Right lobe of liver (tissue), 6 donors: ENCODE measurements at regions of chr10 and their contacts with region 1.

Region 1: GRCh38 chr10:30002104-30002950 is 57.1 kb downstream of the JCAD start:
- DNase-seq: peak; percentile 84 to 90 (median 87)
- ATAC-seq: peak; percentile 73 to 80 (median 78)
- H3K4me3 ChIP-seq: no peak overlapping the region
- H3K27ac ChIP-seq: peak overlapping the region in 2 of 3 donors; percentile 90 to 95
- H3K4me1 ChIP-seq: peaks cover 0 to 36% (median 8%) of the 10 kb centered on the region in 4 donors
- H3K27me3 ChIP-seq: no peaks in the 10 kb centered on the region
- CTCF ChIP-seq: peak; percentile 80 to 93 (median 86)
- POLR2A ChIP-seq: no peak

Region 2: GRCh38 chr10:29926693-29927048 is 75.7 kb before region 1 on chr10:
- intact Hi-C with region 1: loop called in 1 of 2 experiments (anchors 10 kb)
- DNase-seq: peak in 1 of 3 donors; percentile 59
- ATAC-seq: peak; percentile 88 to 96 (median 92)
- H3K4me3 ChIP-seq: no peak overlapping the region
- H3K27ac ChIP-seq: no peak overlapping the region
- H3K4me1 ChIP-seq: no peaks in the 10 kb centered on the region
- H3K27me3 ChIP-seq: no peaks in the 10 kb centered on the region
- CTCF ChIP-seq: peak; percentile 67 to 81 (median 68)
- POLR2A ChIP-seq: no peak

Region 3: DNA sequence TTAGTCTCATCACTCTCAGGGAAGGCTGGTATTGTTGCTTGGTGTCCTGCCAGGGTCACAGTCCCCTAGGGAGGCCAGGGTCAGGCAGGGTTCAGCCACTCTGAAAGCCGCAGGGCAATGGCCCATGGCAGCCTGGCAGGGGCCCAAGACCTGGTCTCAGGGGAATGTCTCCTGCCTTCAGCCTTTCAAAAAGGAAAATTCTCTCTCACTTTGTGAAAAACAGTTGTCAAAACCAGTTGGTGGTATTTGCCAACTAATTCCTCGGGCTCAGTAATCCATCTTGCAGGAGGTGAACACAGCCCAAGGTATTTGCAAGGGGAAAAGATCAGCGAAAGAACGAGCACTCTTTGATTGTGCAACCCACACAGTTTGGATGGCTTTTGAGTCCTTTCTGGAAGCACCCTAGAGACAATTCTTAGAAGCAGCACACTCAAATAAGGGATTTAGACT is 44.4 kb before region 1 on chr10:
- intact Hi-C with region 1: loop called in 1 of 2 experiments (anchors 2 kb)
- DNase-seq: peak; percentile 92 to 97 (median 94)
- ATAC-seq: peak; percentile 62 to 75 (median 72)
- H3K4me3 ChIP-seq: no peak overlapping the region
- H3K27ac ChIP-seq: peak overlapping the region; percentile 72 to 95 (median 86)
- H3K4me1 ChIP-seq: peaks cover 0 to 56% (median 17%) of the 10 kb centered on the region in 4 donors
- H3K27me3 ChIP-seq: no peaks in the 10 kb centered on the region
- CTCF ChIP-seq: no peak
- POLR2A ChIP-seq: no peak

Region 4: DNA sequence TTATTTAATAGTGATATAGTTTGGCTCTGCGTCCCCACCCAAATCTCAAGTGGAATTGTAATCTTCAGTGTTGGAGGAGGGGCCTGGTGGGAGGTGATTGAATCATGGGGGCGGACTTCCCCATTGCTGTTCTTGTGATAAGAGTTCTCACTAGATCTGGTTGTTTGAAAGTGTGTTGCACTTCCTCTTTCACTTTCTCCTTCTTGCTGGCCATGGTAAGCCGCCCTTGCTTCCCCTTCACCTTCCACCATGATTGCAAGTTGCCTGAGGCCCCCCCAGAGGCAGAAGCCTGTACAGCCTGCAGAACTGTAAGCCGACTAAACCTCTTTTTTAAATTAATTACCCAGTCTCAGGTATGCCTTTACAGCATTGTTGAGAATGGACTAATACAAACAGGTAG is 245.4 kb after region 1 on chr10:
- intact Hi-C with region 1: loop called in 1 of 2 experiments (anchors 10 kb)
- DNase-seq: no peak
- ATAC-seq: no peak
- H3K4me3 ChIP-seq: no peak overlapping the region
- H3K27ac ChIP-seq: no peak overlapping the region
- H3K4me1 ChIP-seq: no peaks in the 10 kb centered on the region
- H3K27me3 ChIP-seq: no peaks in the 10 kb centered on the region
- CTCF ChIP-seq: no peak
- POLR2A ChIP-seq: no peak